ENCODE measurements at regions of chr19 and their contacts with region 1.

Region 1: GRCh38 chr19:37217855-37218591 is at the start of gene ZNF383:
- DNase-seq: peak; percentile 63 to 81 (median 78)
- ATAC-seq: peak; percentile 95
- H3K4me3 ChIP-seq: peak within 1 kb of the TSS; percentile 93
- H3K4me3 Mint-ChIP-seq: peak within 1 kb of the TSS; percentile 90 to 97 (median 92)
- H3K27ac ChIP-seq: peak within 1 kb of the TSS; percentile 94
- H3K27ac Mint-ChIP-seq: peak within 1 kb of the TSS; percentile 74 to 99 (median 91)
- H3K4me1 ChIP-seq: peaks cover 0 to 6% of the 10 kb centered on the region in 2 donors
- H3K4me1 Mint-ChIP-seq: peaks cover 21 to 33% (median 31%) of the 10 kb centered on the region in 7 donors
- H3K27me3 ChIP-seq: no peaks in the 10 kb centered on the region
- H3K27me3 Mint-ChIP-seq: no peaks in the 10 kb centered on the region
- total RNA-seq, gene ZNF383: 12.2 to 33.4 (median 21.2) TPM

Region 2: GRCh38 chr19:36528194-36528920 is 689.7 kb before region 1 on chr19 and contains the start of gene ZNF260:
- CTCF ChIA-PET with region 1: no interaction called
- POLR2A ChIA-PET with region 1: interaction called, 4 read pairs
- intact Hi-C with region 1: loop called (anchors 1 to 5 kb)
- DNase-seq: peak; percentile 81 to 94 (median 90)
- ATAC-seq: peak; percentile 95
- H3K4me3 ChIP-seq: peak within 1 kb of the TSS; percentile 91
- H3K4me3 Mint-ChIP-seq: peak within 1 kb of the TSS; percentile 88 to 100 (median 98)
- H3K27ac ChIP-seq: peak within 1 kb of the TSS; percentile 83
- H3K27ac Mint-ChIP-seq: peak within 1 kb of the TSS; percentile 84 to 99 (median 96)
- H3K4me1 ChIP-seq: peaks cover 4 to 11% of the 10 kb centered on the region in 2 donors
- H3K4me1 Mint-ChIP-seq: peaks cover 15 to 31% (median 23%) of the 10 kb centered on the region in 7 donors
- H3K27me3 ChIP-seq: no peaks in the 10 kb centered on the region
- H3K27me3 Mint-ChIP-seq: no peaks in the 10 kb centered on the region
- total RNA-seq, gene ZNF260: 2.9 to 13.2 (median 11.3) TPM

Region 3: DNA sequence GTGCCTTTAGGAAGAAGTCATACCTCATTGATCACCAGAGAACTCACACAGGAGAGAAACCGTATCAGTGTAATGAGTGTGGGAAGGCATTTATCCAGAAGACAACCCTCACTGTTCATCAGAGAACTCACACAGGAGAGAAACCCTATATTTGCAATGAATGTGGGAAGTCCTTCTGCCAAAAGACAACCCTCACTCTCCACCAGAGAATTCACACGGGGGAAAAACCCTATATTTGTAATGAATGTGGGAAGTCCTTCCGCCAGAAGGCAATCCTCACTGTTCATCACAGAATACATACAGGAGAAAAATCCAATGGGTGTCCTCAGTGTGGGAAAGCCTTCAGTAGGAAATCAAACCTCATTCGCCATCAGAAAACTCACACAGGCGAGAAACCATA is 591.0 kb before region 1 on chr19:
- CTCF ChIA-PET with region 1: no interaction called
- POLR2A ChIA-PET with region 1: no interaction called
- intact Hi-C with region 1: no loop called
- DNase-seq: no peak
- ATAC-seq: no peak
- H3K4me3 ChIP-seq: no peak overlapping the region
- H3K4me3 Mint-ChIP-seq: no peak overlapping the region
- H3K27ac ChIP-seq: no peak overlapping the region
- H3K27ac Mint-ChIP-seq: no peak overlapping the region
- H3K4me1 ChIP-seq: no peaks in the 10 kb centered on the region
- H3K4me1 Mint-ChIP-seq: no peaks in the 10 kb centered on the region
- H3K27me3 ChIP-seq: no peaks in the 10 kb centered on the region
- H3K27me3 Mint-ChIP-seq: no peaks in the 10 kb centered on the region

Region 4: GRCh38 chr19:36837906-36838783 is 379.9 kb before region 1 on chr19 and contains the start of gene ZNF790:
- CTCF ChIA-PET with region 1: no interaction called
- POLR2A ChIA-PET with region 1: no interaction called
- intact Hi-C with region 1: loop called in 1 of 2 experiments (anchors 1 kb)
- DNase-seq: peak; percentile 68 to 91 (median 85)
- ATAC-seq: peak; percentile 95
- H3K4me3 ChIP-seq: peak within 1 kb of the TSS; percentile 92
- H3K4me3 Mint-ChIP-seq: peak within 1 kb of the TSS in 1 of 10 donors; percentile 22
- H3K27ac ChIP-seq: peak within 1 kb of the TSS; percentile 92
- H3K27ac Mint-ChIP-seq: peak within 1 kb of the TSS in 5 of 9 donors; percentile 39 to 65 (median 51)
- H3K4me1 ChIP-seq: peaks cover 6 to 11% of the 10 kb centered on the region in 2 donors
- H3K4me1 Mint-ChIP-seq: peaks cover 0 to 21% (median 14%) of the 10 kb centered on the region in 7 donors
- H3K27me3 ChIP-seq: no peaks in the 10 kb centered on the region
- H3K27me3 Mint-ChIP-seq: no peaks in the 10 kb centered on the region
- total RNA-seq, gene ZNF790: 2.6 to 14.4 (median 7.3) TPM

Region 5: DNA sequence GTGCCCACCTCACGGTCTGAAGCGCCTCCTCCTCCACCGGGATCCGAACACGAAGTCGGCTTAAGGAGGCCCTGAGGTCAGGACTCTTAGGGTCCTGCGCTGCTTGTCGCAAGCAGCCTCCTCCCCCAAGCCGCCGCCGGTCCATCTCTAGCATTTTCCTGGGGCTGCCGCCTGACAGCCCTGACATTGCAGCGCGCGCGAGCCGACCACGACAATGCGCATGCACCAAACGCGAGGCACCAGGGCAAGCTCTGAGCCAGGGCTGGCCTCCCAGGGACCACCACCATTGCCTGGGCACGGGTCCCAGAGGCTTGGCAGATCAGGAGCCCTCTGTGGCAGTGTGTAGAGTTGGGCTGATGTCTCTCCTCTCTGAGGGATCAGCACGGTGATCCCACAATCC is 203.6 kb before region 1 on chr19:
- CTCF ChIA-PET with region 1: no interaction called
- POLR2A ChIA-PET with region 1: no interaction called
- intact Hi-C with region 1: no loop called
- DNase-seq: no peak
- ATAC-seq: no peak
- H3K4me3 ChIP-seq: no peak overlapping the region
- H3K4me3 Mint-ChIP-seq: no peak overlapping the region
- H3K27ac ChIP-seq: no peak overlapping the region
- H3K27ac Mint-ChIP-seq: no peak overlapping the region
- H3K4me1 ChIP-seq: no peaks in the 10 kb centered on the region
- H3K4me1 Mint-ChIP-seq: peaks cover 0 to 2% (median 0%) of the 10 kb centered on the region in 7 donors
- H3K27me3 ChIP-seq: no peaks in the 10 kb centered on the region
- H3K27me3 Mint-ChIP-seq: no peaks in the 10 kb centered on the region

Region 6: DNA sequence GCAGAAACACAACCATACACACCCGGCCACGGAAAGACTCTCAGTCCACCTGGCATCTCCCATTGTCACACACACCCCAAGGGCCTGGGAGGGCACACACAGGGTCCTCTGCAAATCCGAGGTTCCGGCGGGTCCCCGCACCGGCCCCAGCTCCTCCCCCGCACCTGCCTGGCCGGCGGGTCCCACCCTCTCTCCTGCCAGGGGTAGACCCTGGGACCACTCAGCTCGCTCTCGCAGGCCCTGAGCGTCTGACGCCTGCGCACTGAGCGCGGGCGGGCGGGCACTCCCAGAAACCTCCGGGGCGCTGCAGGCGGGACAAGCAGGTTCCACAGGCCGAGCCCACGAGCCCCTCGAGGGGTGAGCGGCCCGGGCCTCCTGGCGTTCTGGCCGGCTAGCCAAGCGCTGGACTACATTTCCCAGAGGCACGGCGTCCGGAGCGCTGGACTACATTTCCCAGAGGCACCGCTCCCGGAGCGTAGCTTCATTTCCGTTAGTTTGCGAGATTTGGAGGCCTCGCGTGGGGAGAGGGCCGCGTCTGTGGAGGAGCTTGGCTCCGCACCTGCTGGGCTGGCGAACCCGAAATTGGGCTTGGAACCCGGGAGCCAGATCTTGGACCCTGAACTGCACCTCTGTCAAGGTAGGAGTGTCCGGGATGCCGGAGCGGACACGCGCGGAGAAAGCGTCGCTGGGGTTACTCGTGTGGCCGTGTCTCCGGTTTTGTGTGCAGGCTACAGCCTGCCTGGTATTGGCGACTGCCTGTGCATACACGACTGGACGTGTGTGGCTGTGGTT is 139.9 kb before region 1 on chr19 and contains the start of gene ZNF420:
- CTCF ChIA-PET with region 1: interaction called, 3 read pairs
- POLR2A ChIA-PET with region 1: interaction called, 4 read pairs
- intact Hi-C with region 1: loop called (anchors 1 kb)
- DNase-seq: peak; percentile 64 to 89 (median 84)
- ATAC-seq: peak; percentile 98
- H3K4me3 ChIP-seq: peak within 1 kb of the TSS; percentile 92
- H3K4me3 Mint-ChIP-seq: peak within 1 kb of the TSS; percentile 90 to 100 (median 96)
- H3K27ac ChIP-seq: peak within 1 kb of the TSS; percentile 82
- H3K27ac Mint-ChIP-seq: peak within 1 kb of the TSS; percentile 70 to 99 (median 94)
- H3K4me1 ChIP-seq: peaks cover 11 to 19% of the 10 kb centered on the region in 2 donors
- H3K4me1 Mint-ChIP-seq: peaks cover 16 to 43% (median 34%) of the 10 kb centered on the region in 7 donors
- H3K27me3 ChIP-seq: no peaks in the 10 kb centered on the region
- H3K27me3 Mint-ChIP-seq: no peaks in the 10 kb centered on the region
- total RNA-seq, gene ZNF420: 10.8 to 34.9 (median 15.9) TPM

Region 7: DNA sequence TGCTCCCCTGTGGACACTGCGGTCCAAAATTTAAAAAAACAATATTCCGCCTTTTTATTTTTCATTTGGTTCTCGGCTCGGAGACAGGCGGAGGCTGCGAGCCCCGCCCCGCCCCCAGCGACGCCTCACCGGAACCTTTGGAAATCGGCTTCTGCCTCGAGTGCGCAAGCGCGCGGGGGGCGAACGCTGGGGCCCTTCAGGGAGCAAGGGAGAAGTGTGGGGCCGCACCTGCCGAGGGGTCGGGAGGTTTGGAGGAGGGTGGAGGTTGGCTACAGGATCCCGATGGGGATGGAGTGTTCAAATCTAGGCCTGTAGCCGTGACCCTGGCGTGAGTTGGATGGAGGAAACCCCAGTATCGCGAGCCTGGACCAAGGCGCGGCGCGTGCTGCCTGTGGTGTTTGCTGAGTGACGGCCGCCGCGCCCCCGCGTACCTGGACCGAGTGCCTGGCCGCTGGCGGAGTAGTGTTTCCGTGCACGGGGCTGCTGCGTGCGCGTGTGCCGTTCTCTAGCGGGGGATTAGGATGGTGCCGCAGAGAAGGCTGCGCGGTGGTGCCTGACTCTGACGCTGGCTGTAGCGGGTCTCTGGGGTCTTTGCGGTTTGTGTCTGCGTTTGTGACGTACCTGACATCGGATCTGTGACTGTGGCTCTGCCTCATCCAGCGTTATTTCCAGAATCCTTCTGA is 437.8 kb after region 1 on chr19:
- CTCF ChIA-PET with region 1: no interaction called
- POLR2A ChIA-PET with region 1: interaction called, 3 read pairs
- intact Hi-C with region 1: loop called in 1 of 2 experiments (anchors 10 kb)
- DNase-seq: peak; percentile 74 to 90 (median 86)
- ATAC-seq: peak; percentile 86
- H3K4me3 ChIP-seq: peak overlapping the region; percentile 95
- H3K4me3 Mint-ChIP-seq: peak overlapping the region; percentile 82 to 99 (median 96)
- H3K27ac ChIP-seq: peak overlapping the region; percentile 89
- H3K27ac Mint-ChIP-seq: peak overlapping the region; percentile 81 to 99 (median 97)
- H3K4me1 ChIP-seq: peaks cover 8 to 16% of the 10 kb centered on the region in 2 donors
- H3K4me1 Mint-ChIP-seq: peaks cover 28 to 40% (median 33%) of the 10 kb centered on the region in 7 donors
- H3K27me3 ChIP-seq: no peaks in the 10 kb centered on the region
- H3K27me3 Mint-ChIP-seq: peaks cover 0 to 3% (median 0%) of the 10 kb centered on the region in 5 donors

Region 8: GRCh38 chr19:38315657-38316476 is 1097.8 kb after region 1 on chr19 and contains the start of gene YIF1B:
- CTCF ChIA-PET with region 1: no interaction called
- POLR2A ChIA-PET with region 1: no interaction called
- intact Hi-C with region 1: loop called in 1 of 2 experiments (anchors 10 kb)
- DNase-seq: peak; percentile 93 to 97 (median 95)
- ATAC-seq: peak; percentile 95
- H3K4me3 ChIP-seq: peak within 1 kb of the TSS; percentile 90
- H3K4me3 Mint-ChIP-seq: peak within 1 kb of the TSS; percentile 87 to 96 (median 91)
- H3K27ac ChIP-seq: peak within 1 kb of the TSS; percentile 97
- H3K27ac Mint-ChIP-seq: peak within 1 kb of the TSS; percentile 90 to 97 (median 93)
- H3K4me1 ChIP-seq: peaks cover 14 to 30% of the 10 kb centered on the region in 2 donors
- H3K4me1 Mint-ChIP-seq: peaks cover 29 to 57% (median 48%) of the 10 kb centered on the region in 7 donors
- H3K27me3 ChIP-seq: no peaks in the 10 kb centered on the region
- H3K27me3 Mint-ChIP-seq: no peaks in the 10 kb centered on the region
- total RNA-seq, gene YIF1B: 26.1 to 84.7 (median 38.0) TPM

Measured in naive thymus-derived CD4-positive, alpha-beta T cell (primary cell).